ENCODE measurements at regions of chr10 and their contacts with region 1.

Region 1: DNA sequence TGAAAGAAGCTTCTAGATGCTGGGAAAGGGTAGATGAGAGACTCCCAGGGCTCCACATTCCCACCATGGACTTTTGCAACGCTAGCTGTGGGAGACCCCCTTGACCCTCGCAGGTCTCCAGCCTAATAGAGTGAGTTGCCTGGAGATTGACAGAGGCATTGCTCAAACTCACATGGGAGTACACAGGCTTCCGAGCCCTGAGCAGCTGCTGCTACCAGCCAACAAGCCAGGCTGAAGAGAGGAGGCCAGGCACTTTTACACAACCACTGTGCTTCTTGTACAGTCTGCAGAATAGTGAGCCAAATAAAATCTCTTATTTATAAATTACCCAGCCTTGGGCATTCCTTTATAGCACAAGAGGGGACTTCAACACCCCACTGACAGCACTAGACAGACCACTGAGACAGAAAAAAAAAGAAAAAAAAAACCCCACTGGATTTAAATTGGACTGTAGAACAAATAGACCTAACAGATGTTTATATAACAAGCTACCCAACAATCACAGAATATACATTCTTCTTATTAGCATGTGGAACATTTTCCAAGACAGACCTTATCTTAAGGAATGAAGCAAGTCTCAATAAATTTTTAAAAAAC is 146.2 kb downstream of the ZFAND4 start:
- DNase-seq: no peak
- ATAC-seq: peak; percentile 46; the same call in 1 of the 2 replicates
- H3K4me3 ChIP-seq: no peak overlapping the region
- H3K27ac ChIP-seq: no peak overlapping the region
- H3K4me1 ChIP-seq: peaks cover 2% of the 10 kb centered on the region; the same call in 1 of the 2 replicates
- H3K27me3 ChIP-seq: no peaks in the 10 kb centered on the region
- CTCF ChIP-seq: no peak
- POLR2A ChIP-seq: no peak
- RAD21 ChIP-seq: no peak

Region 2: GRCh38 chr10:45420453-45421192 is 105.8 kb before region 1 on chr10:
- CTCF ChIA-PET with region 1: no interaction called
- POLR2A ChIA-PET with region 1: no interaction called
- dilution Hi-C with region 1: no loop called
- in situ Hi-C with region 1: no loop called
- intact Hi-C with region 1: no loop called
- DNase-seq: peak; percentile 52
- ATAC-seq: no peak; the same call in 1 of the 2 replicates
- H3K4me3 ChIP-seq: no peak overlapping the region
- H3K27ac ChIP-seq: no peak overlapping the region
- H3K4me1 ChIP-seq: peaks cover 2% of the 10 kb centered on the region; the same call in 1 of the 2 replicates
- H3K27me3 ChIP-seq: peaks cover 49% of the 10 kb centered on the region
- CTCF ChIP-seq: no peak
- POLR2A ChIP-seq: no peak
- RAD21 ChIP-seq: no peak

Region 3: GRCh38 chr10:45491091-45491490 is 35.3 kb before region 1 on chr10:
- CTCF ChIA-PET with region 1: no interaction called
- POLR2A ChIA-PET with region 1: no interaction called
- dilution Hi-C with region 1: no loop called
- in situ Hi-C with region 1: no loop called
- intact Hi-C with region 1: loop called (anchors 5 kb)
- DNase-seq: no peak
- ATAC-seq: no peak
- H3K4me3 ChIP-seq: no peak overlapping the region
- H3K27ac ChIP-seq: no peak overlapping the region
- H3K4me1 ChIP-seq: no peaks in the 10 kb centered on the region
- H3K27me3 ChIP-seq: no peaks in the 10 kb centered on the region
- CTCF ChIP-seq: no peak
- POLR2A ChIP-seq: no peak
- RAD21 ChIP-seq: no peak

Measured in IMR-90 (cell line).